Mammary epithelial cell (primary cell): ENCODE measurements at regions of chr2 and their contacts with region 1.

Region 1: DNA sequence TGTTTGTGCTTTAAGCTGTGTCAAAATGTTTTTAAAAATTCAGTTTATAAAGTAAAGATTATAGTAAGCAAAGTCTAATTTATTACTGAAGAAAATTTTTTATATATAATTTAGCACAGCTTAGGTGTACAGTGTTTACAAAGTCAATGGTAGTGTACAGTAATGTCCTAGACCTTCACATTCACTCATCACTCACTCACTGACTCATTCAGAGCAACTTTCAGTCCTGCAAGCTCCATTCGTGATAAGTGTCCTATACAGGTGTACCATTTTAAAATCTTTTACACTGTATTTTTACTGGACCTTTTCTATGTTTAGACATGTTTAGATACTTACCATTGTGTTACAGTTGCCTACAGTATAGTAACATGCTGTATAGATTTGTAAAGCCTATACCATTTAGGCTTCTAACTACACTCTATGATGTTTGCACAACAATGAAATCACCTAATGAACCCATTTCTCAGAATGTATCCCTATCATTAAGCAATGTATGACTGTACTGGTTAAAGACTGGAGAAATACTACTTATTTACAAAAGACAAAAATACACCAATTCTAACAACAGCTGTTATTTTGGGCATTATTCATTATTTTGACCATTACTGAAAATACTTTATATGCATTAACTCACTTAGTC is 95.1 kb downstream of the STRN start:
- DNase-seq: peak; percentile 11
- H3K4me3 ChIP-seq: no peak overlapping the region
- H3K27ac ChIP-seq: no peak overlapping the region
- H3K4me1 ChIP-seq: no peaks in the 10 kb centered on the region
- H3K27me3 ChIP-seq: no peaks in the 10 kb centered on the region
- CTCF ChIP-seq: no peak

Region 2: GRCh38 chr2:36800381-36800780 is 70.8 kb before region 1 on chr2:
- CTCF ChIA-PET with region 1: no interaction called
- dilution Hi-C with region 1: no loop called
- in situ Hi-C with region 1: no loop called
- intact Hi-C with region 1: no loop called
- DNase-seq: no peak
- H3K4me3 ChIP-seq: no peak overlapping the region
- H3K27ac ChIP-seq: no peak overlapping the region
- H3K4me1 ChIP-seq: no peaks in the 10 kb centered on the region
- H3K27me3 ChIP-seq: no peaks in the 10 kb centered on the region
- CTCF ChIP-seq: no peak

Region 3: DNA sequence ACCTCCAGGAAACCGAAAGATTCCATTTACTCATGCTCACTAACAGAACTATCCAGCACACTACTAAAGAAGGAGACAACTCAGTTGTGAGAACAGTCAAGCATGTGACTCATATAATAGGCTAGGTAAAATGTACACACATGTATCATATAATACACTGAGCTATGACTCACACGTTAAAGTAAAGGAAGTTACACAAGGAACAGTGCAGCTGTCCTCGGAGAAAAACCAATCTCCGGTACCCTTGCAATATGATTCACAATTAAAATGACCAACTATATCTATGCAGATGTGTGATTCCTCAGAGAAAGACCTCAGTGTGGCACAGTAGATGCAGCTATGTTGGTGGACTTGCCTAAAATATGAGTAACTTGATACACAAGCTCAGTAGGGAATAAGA is 18.6 kb after region 1 on chr2:
- CTCF ChIA-PET with region 1: interaction called, 12 read pairs
- dilution Hi-C with region 1: no loop called
- in situ Hi-C with region 1: no loop called
- intact Hi-C with region 1: no loop called
- DNase-seq: peak; percentile 97
- H3K4me3 ChIP-seq: peak overlapping the region; percentile 9 to 25 (median 19)
- H3K27ac ChIP-seq: peak overlapping the region; percentile 86
- H3K4me1 ChIP-seq: peaks cover 14% of the 10 kb centered on the region
- H3K27me3 ChIP-seq: no peaks in the 10 kb centered on the region
- CTCF ChIP-seq: no peak

Region 4: GRCh38 chr2:36918307-36918706 is 47.1 kb after region 1 on chr2:
- CTCF ChIA-PET with region 1: no interaction called
- dilution Hi-C with region 1: no loop called
- in situ Hi-C with region 1: no loop called
- intact Hi-C with region 1: no loop called
- DNase-seq: no peak
- H3K4me3 ChIP-seq: no peak overlapping the region
- H3K27ac ChIP-seq: no peak overlapping the region
- H3K4me1 ChIP-seq: no peaks in the 10 kb centered on the region
- H3K27me3 ChIP-seq: no peaks in the 10 kb centered on the region
- CTCF ChIP-seq: peak in 1 of 2 donors; percentile 25